ENCODE measurements at regions of chr9 and their contacts with region 1.

Region 1: DNA sequence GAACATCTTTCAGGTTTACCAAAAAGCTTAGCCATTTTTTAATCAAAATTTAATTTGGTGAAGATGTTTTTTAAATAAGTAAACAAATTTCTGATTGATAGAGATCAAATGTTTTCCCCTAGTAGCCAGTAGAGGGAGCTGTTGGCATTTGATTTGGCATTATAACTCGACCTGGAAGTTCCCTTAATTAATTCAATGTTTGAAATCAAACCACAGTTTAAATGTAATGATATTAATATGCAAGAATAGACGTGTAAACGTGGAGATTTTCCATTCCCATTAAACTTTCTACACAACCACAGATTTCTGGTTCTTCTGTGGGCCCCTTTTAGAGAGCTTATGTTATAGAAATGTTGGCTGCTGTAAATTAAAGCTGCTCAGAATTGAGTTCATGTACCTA is 148.1 kb upstream of the MPDZ start:
- DNase-seq: peak; percentile 67
- H3K4me3 Mint-ChIP-seq: no peak overlapping the region
- H3K27ac Mint-ChIP-seq: no peak overlapping the region
- H3K4me1 Mint-ChIP-seq: no peaks in the 10 kb centered on the region
- H3K27me3 Mint-ChIP-seq: no peaks in the 10 kb centered on the region
- CTCF ChIP-seq: peak; percentile 69

Region 2: DNA sequence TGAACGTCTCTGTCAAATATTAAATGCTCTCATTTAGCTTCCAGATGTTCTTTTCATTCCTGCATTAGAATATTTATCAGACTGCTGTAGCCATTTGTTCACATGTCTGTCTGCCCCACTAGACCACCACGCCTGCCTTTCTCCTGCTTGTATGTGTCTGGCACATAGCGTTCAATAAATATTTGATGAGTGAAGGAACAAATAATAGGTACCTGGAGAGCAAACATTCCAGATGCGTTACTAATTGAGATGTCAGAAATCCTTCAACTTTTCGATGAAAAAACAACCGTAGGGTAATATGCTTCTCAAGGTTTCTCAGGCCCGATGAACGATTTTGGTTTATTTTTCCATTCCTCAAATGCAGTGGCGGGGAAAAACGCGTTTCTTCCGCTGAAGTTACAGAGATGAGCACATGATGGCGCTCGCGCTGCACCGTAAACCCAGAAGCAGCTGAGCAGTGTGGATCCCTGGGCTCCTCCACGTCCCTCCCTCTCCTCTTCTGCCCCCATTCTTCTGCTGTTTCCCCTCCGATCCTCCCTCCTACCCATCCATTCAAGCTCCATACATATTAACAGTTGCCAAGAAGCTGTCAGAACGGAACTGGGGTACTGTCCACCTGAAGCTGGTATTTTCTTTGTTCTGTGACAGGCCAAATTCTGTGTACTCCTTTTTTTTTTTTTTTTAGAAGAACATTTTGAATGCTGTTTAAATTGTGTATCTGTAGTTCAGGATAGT is 393.5 kb before region 1 on chr9:
- CTCF ChIA-PET with region 1: interaction called, 3 read pairs
- POLR2A ChIA-PET with region 1: no interaction called
- intact Hi-C with region 1: loop called (anchors 5 kb)
- DNase-seq: peak; percentile 68
- H3K4me3 Mint-ChIP-seq: peak overlapping the region; percentile 30
- H3K27ac Mint-ChIP-seq: no peak overlapping the region
- H3K4me1 Mint-ChIP-seq: peaks cover 16% of the 10 kb centered on the region
- H3K27me3 Mint-ChIP-seq: no peaks in the 10 kb centered on the region
- CTCF ChIP-seq: peak; percentile 83

Region 3: DNA sequence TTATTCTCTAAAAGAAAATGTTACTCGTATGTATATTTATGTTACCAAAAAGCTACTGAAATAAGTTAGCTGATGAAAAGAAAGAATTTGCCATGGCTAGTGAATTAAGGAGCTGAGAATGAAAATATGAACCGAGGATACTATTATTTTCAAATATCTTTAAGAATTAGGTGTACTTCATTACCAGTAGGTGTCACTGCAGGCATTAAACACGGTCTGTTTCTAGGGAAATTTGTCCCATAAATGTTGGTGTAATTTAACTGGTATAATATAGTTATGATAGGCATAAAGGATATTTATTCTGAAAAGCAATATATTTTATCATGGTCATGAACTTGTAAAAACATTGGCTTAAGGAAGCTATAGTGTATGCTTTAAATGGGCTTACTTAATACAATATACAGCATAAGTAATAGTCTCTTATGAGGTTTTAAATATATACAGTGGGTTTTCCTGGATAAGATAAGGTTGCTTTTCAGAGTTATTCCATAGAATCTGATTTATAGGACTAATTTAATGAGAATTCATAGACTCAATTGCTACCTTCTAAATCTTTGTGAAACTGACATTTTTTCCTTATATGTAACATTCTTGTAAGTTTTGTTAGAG is 75.7 kb before region 1 on chr9:
- CTCF ChIA-PET with region 1: interaction called, 17 read pairs
- POLR2A ChIA-PET with region 1: no interaction called
- intact Hi-C with region 1: loop called (anchors 5 kb)
- DNase-seq: peak; percentile 61
- H3K4me3 Mint-ChIP-seq: no peak overlapping the region
- H3K27ac Mint-ChIP-seq: no peak overlapping the region
- H3K4me1 Mint-ChIP-seq: no peaks in the 10 kb centered on the region
- H3K27me3 Mint-ChIP-seq: no peaks in the 10 kb centered on the region
- CTCF ChIP-seq: peak; percentile 45

Region 4: DNA sequence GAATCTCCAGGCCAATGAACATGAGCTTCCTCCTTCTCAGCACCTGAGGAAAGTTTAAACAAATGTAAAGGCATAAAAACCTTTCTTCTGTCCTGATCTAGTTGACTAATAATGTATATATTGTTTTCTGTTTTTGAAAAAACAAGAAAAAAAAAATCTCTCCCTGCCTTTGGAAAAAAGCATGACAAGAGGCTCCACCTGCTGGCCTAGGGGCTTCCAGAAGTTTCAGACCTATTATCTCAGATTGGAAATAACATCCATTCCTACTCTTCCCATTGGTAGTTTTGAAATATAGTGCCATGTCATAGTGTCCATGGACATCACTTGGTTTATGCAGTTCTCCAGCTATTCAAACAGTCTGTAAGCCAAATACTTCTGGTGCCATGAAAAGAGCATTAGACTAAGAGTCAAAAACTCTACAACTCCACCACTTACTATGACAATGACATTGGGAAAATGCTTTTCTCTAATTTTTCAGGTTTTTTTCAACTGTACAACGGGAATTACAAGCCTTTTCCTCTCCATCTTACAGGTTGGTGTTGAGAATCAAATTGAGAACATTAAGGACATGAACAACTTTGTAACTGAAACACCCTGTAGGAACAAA is 261.5 kb after region 1 on chr9:
- CTCF ChIA-PET with region 1: interaction called, 17 read pairs
- POLR2A ChIA-PET with region 1: interaction called, 4 read pairs
- intact Hi-C with region 1: no loop called
- DNase-seq: peak; percentile 31
- H3K4me3 Mint-ChIP-seq: no peak overlapping the region
- H3K27ac Mint-ChIP-seq: no peak overlapping the region
- H3K4me1 Mint-ChIP-seq: peaks cover 13% of the 10 kb centered on the region
- H3K27me3 Mint-ChIP-seq: no peaks in the 10 kb centered on the region
- CTCF ChIP-seq: peak; percentile 33

Region 5: DNA sequence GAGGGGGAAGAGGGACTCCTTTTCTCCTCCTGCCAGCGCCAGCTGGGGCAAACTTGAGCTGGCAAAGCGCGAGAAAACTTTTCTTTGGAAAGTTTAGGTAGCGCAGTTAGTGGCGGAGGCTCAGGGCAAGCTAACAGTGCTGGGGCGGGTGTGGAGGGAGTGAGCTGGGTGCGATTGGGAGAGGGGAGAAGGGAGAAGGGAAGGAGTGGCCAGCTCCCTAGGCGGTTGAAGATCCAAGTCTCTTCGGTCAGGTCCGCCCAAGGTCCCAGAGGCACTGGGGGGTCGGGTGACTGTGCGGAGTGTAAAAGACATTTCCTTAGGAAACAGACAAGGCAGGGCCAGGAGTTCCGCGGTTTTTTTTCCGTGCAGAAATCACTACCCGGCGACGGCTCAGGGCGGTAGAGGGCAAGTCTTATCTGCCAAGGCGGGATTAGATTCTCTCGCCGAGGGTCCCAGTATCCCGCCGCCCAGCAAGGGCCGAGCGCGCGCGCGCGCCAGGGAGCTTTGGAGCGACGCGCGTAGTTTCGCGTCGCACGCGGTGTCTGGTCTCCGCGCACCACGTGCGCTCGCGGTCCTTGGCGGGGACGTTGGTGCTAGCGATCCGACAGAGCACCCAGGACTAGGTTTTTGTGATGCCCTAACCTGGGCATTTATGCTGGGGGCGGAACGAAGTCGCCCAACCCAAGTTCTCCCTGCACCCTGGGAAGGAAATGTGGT is 920.0 kb after region 1 on chr9:
- CTCF ChIA-PET with region 1: interaction called, 64 read pairs
- POLR2A ChIA-PET with region 1: no interaction called
- intact Hi-C with region 1: no loop called
- DNase-seq: peak; percentile 66
- H3K4me3 Mint-ChIP-seq: peak overlapping the region; percentile 69
- H3K27ac Mint-ChIP-seq: no peak overlapping the region
- H3K4me1 Mint-ChIP-seq: no peaks in the 10 kb centered on the region
- H3K27me3 Mint-ChIP-seq: no peaks in the 10 kb centered on the region
- CTCF ChIP-seq: no peak

Region 6: GRCh38 chr9:14428781-14429230 is 1001.2 kb after region 1 on chr9:
- CTCF ChIA-PET with region 1: interaction called, 54 read pairs
- POLR2A ChIA-PET with region 1: interaction called, 3 read pairs
- intact Hi-C with region 1: loop called (anchors 1 kb)
- DNase-seq: peak; percentile 73
- H3K4me3 Mint-ChIP-seq: no peak overlapping the region
- H3K27ac Mint-ChIP-seq: no peak overlapping the region
- H3K4me1 Mint-ChIP-seq: peaks cover 7% of the 10 kb centered on the region
- H3K27me3 Mint-ChIP-seq: no peaks in the 10 kb centered on the region
- CTCF ChIP-seq: peak; percentile 75

Region 7: DNA sequence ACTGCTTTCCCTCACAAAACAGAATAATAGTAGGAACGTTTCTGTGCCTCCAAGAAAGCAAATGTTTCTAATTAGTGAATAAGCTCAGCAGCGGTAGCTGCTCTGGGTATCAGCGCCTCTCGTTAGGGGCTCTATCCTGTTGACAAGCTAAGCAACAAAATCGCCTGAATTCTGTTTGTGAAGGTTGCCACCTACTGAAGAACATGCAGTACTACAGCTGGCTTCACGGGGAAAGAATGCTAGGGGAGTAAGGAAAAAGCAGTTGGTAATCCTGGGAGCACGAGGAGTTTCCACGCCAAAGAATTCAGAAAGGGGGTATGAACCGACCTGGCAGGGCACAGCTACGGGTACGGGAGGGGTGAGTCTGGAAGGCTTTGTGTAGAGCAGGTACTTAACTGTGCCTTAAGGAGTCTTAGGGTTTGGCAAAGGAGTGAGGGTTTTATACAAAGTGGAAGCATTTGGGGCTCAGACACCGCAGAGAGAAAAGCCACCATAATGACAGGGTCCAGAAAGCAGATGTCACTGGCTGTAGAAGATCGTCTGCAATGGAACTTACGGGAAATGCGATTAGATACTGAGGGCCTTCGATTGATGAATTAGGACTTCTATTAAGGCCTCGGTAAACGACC is 1707.7 kb after region 1 on chr9:
- CTCF ChIA-PET with region 1: interaction called, 3 read pairs
- POLR2A ChIA-PET with region 1: no interaction called
- intact Hi-C with region 1: loop called (anchors 5 kb)
- DNase-seq: peak; percentile 82
- H3K4me3 Mint-ChIP-seq: peak overlapping the region; percentile 11
- H3K27ac Mint-ChIP-seq: no peak overlapping the region
- H3K4me1 Mint-ChIP-seq: peaks cover 6% of the 10 kb centered on the region
- H3K27me3 Mint-ChIP-seq: no peaks in the 10 kb centered on the region
- CTCF ChIP-seq: peak; percentile 82

Measured in MCF 10A (cell line).